HepG2 (cell line): ENCODE measurements at regions of chr2 and their contacts with region 1.

Region 1: DNA sequence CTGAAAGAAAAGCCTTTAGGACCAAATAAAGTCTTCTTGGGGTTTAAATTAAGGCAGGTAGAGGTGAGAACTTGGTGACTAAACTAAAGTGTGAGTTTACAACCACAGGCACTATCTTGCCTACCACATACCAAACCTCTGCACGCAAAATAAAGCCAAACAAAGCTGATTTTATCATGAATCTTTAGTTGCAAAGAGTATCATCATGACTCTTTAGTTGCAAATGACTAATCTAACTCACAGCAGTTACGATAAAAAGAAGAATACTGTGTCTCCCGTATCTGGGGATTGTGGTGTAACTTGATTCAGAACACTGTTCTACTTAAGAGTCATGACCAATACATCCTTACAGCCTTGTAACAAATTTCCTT is 11.2 kb downstream of the CFAP210 start:
- DNase-seq: no peak
- ATAC-seq: no peak
- H3K4me3 ChIP-seq: peak overlapping the region in 2 of 3 experiments; percentile 13 to 29; a peak in 2 of 6 replicates
- H3K27ac ChIP-seq: peak overlapping the region; percentile 92
- H3K4me1 ChIP-seq: peaks cover 38% of the 10 kb centered on the region
- H3K27me3 ChIP-seq: no peaks in the 10 kb centered on the region
- CTCF ChIP-seq: no peak
- EP300 ChIP-seq: no peak
- POLR2A ChIP-seq: peak in 1 of 2 experiments; percentile 5; a peak in 1 of 4 replicates
- RAD21 ChIP-seq: no peak

Region 2: DNA sequence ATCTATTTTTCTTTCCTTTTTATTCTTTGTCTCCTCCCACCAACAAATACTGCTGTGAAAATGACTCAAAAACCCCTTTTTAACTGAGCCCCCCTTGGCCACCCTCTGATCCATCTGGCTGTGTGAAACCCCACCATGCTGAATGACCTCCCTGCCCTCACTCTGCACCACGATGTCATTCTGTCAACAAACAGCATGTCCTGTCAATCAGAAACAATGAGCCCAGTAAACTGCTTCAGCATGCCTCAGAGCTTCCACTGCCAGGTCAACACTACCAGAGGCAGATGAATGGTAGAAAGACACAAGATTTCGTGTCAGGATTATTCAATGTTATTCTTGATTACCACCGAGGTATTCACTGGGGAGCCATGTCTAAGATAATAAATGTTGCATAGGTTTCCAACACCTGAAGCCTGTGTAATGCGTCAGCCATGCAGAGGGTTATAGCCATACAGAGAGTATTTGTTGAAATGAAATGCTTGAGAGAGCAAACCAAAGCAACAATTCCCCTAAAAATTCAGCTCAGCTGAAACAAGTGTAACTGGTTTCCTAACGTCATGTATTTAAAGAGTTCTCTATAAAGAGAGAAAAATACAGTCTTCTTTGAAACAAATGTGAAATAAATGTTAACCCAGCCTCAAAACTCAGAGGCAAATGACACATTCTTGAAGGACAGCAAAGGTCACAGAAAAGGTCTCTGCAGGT is 397.4 kb before region 1 on chr2:
- CTCF ChIA-PET with region 1: no interaction called
- POLR2A ChIA-PET with region 1: no interaction called
- in situ Hi-C with region 1: no loop called
- intact Hi-C with region 1: no loop called
- DNase-seq: no peak
- ATAC-seq: peak; percentile 48; the same call in 1 of the 3 replicates
- H3K4me3 ChIP-seq: no peak overlapping the region
- H3K27ac ChIP-seq: no peak overlapping the region
- H3K4me1 ChIP-seq: no peaks in the 10 kb centered on the region
- H3K27me3 ChIP-seq: peaks cover 0 to 13% of the 10 kb centered on the region in 2 experiments; a peak in 1 of 5 replicates
- CTCF ChIP-seq: no peak
- EP300 ChIP-seq: no peak
- POLR2A ChIP-seq: no peak
- RAD21 ChIP-seq: no peak

Region 3: DNA sequence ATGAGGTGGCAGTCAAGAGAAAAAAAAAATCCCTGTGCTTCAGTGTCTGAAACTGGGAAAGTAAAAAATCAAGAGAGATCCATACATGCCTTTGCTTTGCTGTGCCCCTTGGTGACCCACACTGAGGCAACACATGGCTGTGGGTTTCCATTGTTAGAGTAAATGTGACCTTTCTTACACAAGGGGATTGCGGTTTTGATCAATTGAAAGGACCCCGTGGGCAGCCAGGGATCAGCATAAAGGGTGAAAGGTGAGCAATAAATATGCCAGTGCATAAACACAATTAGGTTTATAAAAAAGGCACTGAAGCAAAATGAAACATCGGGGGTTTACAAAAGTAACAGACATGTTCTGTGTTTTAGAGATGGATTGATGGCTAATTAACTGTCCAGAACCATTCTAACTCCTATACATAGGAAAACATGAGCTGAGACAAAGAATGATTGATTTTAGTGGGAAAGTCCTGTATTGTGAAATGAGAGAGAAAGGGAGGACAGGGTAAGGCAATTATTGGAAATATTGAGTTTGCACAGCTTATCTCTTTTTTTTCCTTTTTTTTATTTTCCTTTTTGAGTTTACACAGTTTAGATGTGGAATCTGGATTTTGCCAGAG is 244.5 kb before region 1 on chr2:
- CTCF ChIA-PET with region 1: no interaction called
- POLR2A ChIA-PET with region 1: no interaction called
- in situ Hi-C with region 1: no loop called
- intact Hi-C with region 1: no loop called
- DNase-seq: no peak
- ATAC-seq: no peak
- H3K4me3 ChIP-seq: no peak overlapping the region
- H3K27ac ChIP-seq: no peak overlapping the region
- H3K4me1 ChIP-seq: 0 out of 2 replicates have a peak, but pooled peaks cover 4% of the 10 kb centered on the region
- H3K27me3 ChIP-seq: 0 out of 5 replicates have a peak, but pooled peaks cover 0 to 4% of the 10 kb centered on the region in 2 experiments
- CTCF ChIP-seq: no peak
- EP300 ChIP-seq: no peak
- POLR2A ChIP-seq: no peak
- RAD21 ChIP-seq: no peak

Region 4: GRCh38 chr2:169573160-169573973 is 109.7 kb before region 1 on chr2 and contains the start of gene FASTKD1:
- CTCF ChIA-PET with region 1: no interaction called
- POLR2A ChIA-PET with region 1: interaction called, 3 read pairs
- in situ Hi-C with region 1: no loop called
- intact Hi-C with region 1: loop called (anchors 5 kb)
- DNase-seq: peak; percentile 95
- ATAC-seq: peak; percentile 99
- H3K4me3 ChIP-seq: peak within 1 kb of the TSS; percentile 83 to 86 (median 84)
- H3K27ac ChIP-seq: peak within 1 kb of the TSS; percentile 52
- H3K4me1 ChIP-seq: peaks cover 29% of the 10 kb centered on the region
- H3K27me3 ChIP-seq: no peaks in the 10 kb centered on the region; a peak in 1 of 5 replicates
- CTCF ChIP-seq: no peak
- EP300 ChIP-seq: peak; percentile 23 to 73; a peak in 3 of 4 replicates
- POLR2A ChIP-seq: peak; percentile 42 to 72; a peak in 3 of 4 replicates
- RAD21 ChIP-seq: peak; percentile 40
- total RNA-seq, gene FASTKD1: 38.0 and 43.2 TPM in 2 replicates

Region 5: GRCh38 chr2:169694113-169694903 is 11.3 kb after region 1 on chr2 and contains the starts of genes CFAP210 and PHOSPHO2:
- CTCF ChIA-PET with region 1: no interaction called
- POLR2A ChIA-PET with region 1: interaction called, 19 read pairs
- in situ Hi-C with region 1: no loop called
- intact Hi-C with region 1: loop called (anchors 1 kb)
- DNase-seq: peak; percentile 96
- ATAC-seq: peak; percentile 99
- H3K4me3 ChIP-seq: peak within 1 kb of the TSS; percentile 78 to 88 (median 81)
- H3K27ac ChIP-seq: peak within 1 kb of the TSS; percentile 79
- H3K4me1 ChIP-seq: peaks cover 44% of the 10 kb centered on the region
- H3K27me3 ChIP-seq: no peaks in the 10 kb centered on the region; a peak in 1 of 5 replicates
- CTCF ChIP-seq: peak; percentile 46
- EP300 ChIP-seq: peak in 1 of 2 experiments; percentile 67; a peak in 1 of 4 replicates
- POLR2A ChIP-seq: peak; percentile 92 to 99
- RAD21 ChIP-seq: peak; percentile 69
- total RNA-seq, gene CFAP210: 0.14 and 0.18 TPM in 2 replicates
- total RNA-seq, gene PHOSPHO2: 11.4 and 14.6 TPM in 2 replicates

Region 6: GRCh38 chr2:169716238-169716886 is 33.3 kb after region 1 on chr2:
- CTCF ChIA-PET with region 1: no interaction called
- POLR2A ChIA-PET with region 1: interaction called, 32 read pairs
- in situ Hi-C with region 1: no loop called
- intact Hi-C with region 1: loop called (anchors 1 kb)
- DNase-seq: no peak
- ATAC-seq: peak; percentile 71
- H3K4me3 ChIP-seq: peak overlapping the region; percentile 50 to 70 (median 51)
- H3K27ac ChIP-seq: peak overlapping the region; percentile 6
- H3K4me1 ChIP-seq: peaks cover 80% of the 10 kb centered on the region
- H3K27me3 ChIP-seq: no peaks in the 10 kb centered on the region
- CTCF ChIP-seq: no peak
- EP300 ChIP-seq: no peak
- POLR2A ChIP-seq: no peak; a peak in 1 of 4 replicates
- RAD21 ChIP-seq: no peak

Region 7: GRCh38 chr2:169734169-169734847 is 51.3 kb after region 1 on chr2:
- CTCF ChIA-PET with region 1: no interaction called
- POLR2A ChIA-PET with region 1: interaction called, 13 read pairs
- in situ Hi-C with region 1: no loop called
- intact Hi-C with region 1: loop called (anchors 1 kb)
- DNase-seq: no peak
- ATAC-seq: peak; percentile 27; the same call in 2 of the 3 replicates
- H3K4me3 ChIP-seq: peak overlapping the region; percentile 64 to 89 (median 87)
- H3K27ac ChIP-seq: peak overlapping the region; percentile 70
- H3K4me1 ChIP-seq: peaks cover 64% of the 10 kb centered on the region
- H3K27me3 ChIP-seq: no peaks in the 10 kb centered on the region; a peak in 1 of 5 replicates
- CTCF ChIP-seq: no peak
- EP300 ChIP-seq: no peak
- POLR2A ChIP-seq: no peak
- RAD21 ChIP-seq: no peak

Region 8: DNA sequence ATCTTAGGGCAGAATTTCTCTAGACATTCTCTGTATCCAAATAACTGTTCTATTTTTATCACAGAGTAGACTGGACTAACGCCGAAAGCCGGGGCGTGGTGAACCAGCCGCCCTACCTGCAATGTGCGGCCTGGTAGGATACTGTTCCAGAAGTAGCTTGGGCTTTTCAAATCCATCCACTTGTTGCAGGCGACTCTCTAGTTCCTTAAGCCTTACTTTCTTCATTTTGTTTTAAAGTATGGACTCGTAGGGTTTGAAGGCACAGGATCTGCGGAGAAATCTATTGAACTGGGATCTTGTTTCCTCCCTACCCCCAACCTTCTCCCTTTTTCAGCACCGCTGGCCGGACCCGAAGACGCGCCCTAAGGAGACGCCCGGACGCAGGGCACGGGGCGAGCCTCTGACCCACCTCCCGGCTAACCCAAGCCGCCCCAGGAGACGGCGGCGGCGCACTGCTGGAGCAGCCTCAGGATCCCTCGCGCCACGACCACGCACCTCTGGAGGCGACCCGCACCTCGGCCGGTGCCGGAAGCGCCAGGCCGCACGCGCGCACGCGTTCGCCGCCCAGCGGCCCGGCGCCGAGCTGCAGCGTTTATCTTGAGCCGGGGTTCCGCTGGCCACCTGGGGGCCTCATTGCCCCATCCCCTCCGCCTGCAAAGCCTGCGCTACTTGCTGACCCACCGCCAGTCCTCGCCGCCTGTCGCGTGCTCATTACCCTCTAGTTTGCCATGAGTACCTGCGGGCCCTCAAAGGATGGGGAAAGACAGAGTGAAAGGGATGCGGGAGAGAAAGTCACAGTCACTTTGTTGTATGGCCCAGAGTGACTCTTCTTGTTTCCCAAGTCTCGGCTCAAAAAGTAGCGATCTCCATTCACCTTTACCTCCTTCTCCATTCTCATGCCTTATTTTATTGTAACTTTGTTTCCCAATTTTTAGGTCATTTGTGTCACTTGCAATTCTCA is 141.6 kb after region 1 on chr2 and contains the start of gene METTL5:
- CTCF ChIA-PET with region 1: no interaction called
- POLR2A ChIA-PET with region 1: interaction called, 11 read pairs
- in situ Hi-C with region 1: no loop called
- intact Hi-C with region 1: no loop called
- DNase-seq: peak; percentile 82
- ATAC-seq: peak; percentile 80
- H3K4me3 ChIP-seq: peak within 1 kb of the TSS; percentile 86 to 97 (median 88)
- H3K27ac ChIP-seq: peak within 1 kb of the TSS; percentile 69
- H3K4me1 ChIP-seq: peaks cover 58% of the 10 kb centered on the region
- H3K27me3 ChIP-seq: no peaks in the 10 kb centered on the region; a peak in 1 of 5 replicates
- CTCF ChIP-seq: peak; percentile 98
- EP300 ChIP-seq: no peak
- POLR2A ChIP-seq: peak; percentile 84 to 98
- RAD21 ChIP-seq: peak; percentile 98
- total RNA-seq, gene METTL5: 95.1 and 129 TPM in 2 replicates